ENCODE measurements at regions of chr12 and their contacts with region 1.

Region 1: DNA sequence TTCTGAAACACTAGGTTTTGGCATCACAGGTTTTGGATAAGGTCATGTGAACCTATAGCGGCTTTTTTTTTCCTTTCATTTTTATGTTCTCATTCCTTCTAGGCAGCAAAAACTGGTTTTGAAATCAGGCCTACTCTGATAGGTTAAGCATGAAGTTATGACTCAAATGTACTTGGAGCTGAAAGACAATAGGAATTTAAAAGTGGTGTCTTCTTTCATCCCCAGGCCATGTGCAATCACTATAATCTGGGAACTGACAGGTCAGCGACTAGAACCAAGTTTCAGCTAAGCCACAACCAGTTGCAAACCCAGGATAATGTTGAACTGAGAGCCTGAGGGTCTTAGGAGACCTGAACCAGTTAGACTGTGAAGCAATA is 74.3 kb downstream of the ANO6 start:
- DNase-seq: peak; percentile 94
- H3K4me3 Mint-ChIP-seq: peak overlapping the region; percentile 18
- H3K27ac Mint-ChIP-seq: peak overlapping the region; percentile 54
- H3K4me1 Mint-ChIP-seq: peaks cover 18% of the 10 kb centered on the region
- H3K27me3 Mint-ChIP-seq: no peaks in the 10 kb centered on the region
- CTCF ChIP-seq: no peak

Region 2: GRCh38 chr12:45336331-45337064 is 46.3 kb after region 1 on chr12:
- CTCF ChIA-PET with region 1: interaction called, 3 read pairs
- POLR2A ChIA-PET with region 1: interaction called, 12 read pairs
- intact Hi-C with region 1: no loop called
- DNase-seq: peak; percentile 77
- H3K4me3 Mint-ChIP-seq: no peak overlapping the region
- H3K27ac Mint-ChIP-seq: no peak overlapping the region
- H3K4me1 Mint-ChIP-seq: peaks cover 18% of the 10 kb centered on the region
- H3K27me3 Mint-ChIP-seq: no peaks in the 10 kb centered on the region
- CTCF ChIP-seq: no peak